ENCODE measurements at regions of chr5 and their contacts with region 1.

Region 1: GRCh38 chr5:154384480-154385235 is 61.1 kb upstream of the SAP30L start:
- DNase-seq: peak; percentile 89
- ATAC-seq: peak; percentile 86
- H3K4me3 ChIP-seq: peak overlapping the region in 4 of 5 experiments; percentile 18 to 56 (median 26)
- H3K4me3 Mint-ChIP-seq: peak overlapping the region; percentile 87
- H3K27ac ChIP-seq: peak overlapping the region; percentile 88 to 95
- H3K27ac Mint-ChIP-seq: peak overlapping the region; percentile 94
- H3K4me1 ChIP-seq: peaks cover 25 to 32% of the 10 kb centered on the region in 2 donors
- H3K4me1 Mint-ChIP-seq: peaks cover 31% of the 10 kb centered on the region
- H3K27me3 ChIP-seq: no peaks in the 10 kb centered on the region
- H3K27me3 Mint-ChIP-seq: no peaks in the 10 kb centered on the region
- CTCF ChIP-seq: no peak

Region 2: GRCh38 chr5:154368041-154368800 is 16.4 kb before region 1 on chr5:
- CTCF ChIA-PET with region 1: no interaction called
- POLR2A ChIA-PET with region 1: no interaction called
- intact Hi-C with region 1: no loop called
- DNase-seq: no peak
- ATAC-seq: no peak
- H3K4me3 ChIP-seq: no peak overlapping the region
- H3K4me3 Mint-ChIP-seq: no peak overlapping the region
- H3K27ac ChIP-seq: no peak overlapping the region
- H3K27ac Mint-ChIP-seq: no peak overlapping the region
- H3K4me1 ChIP-seq: no peaks in the 10 kb centered on the region
- H3K4me1 Mint-ChIP-seq: no peaks in the 10 kb centered on the region
- H3K27me3 ChIP-seq: no peaks in the 10 kb centered on the region
- H3K27me3 Mint-ChIP-seq: no peaks in the 10 kb centered on the region
- CTCF ChIP-seq: no peak

Region 3: GRCh38 chr5:154395407-154396258 is 11.0 kb after region 1 on chr5:
- CTCF ChIA-PET with region 1: interaction called, 3 read pairs
- POLR2A ChIA-PET with region 1: no interaction called
- intact Hi-C with region 1: loop called (anchors 1 kb)
- DNase-seq: peak; percentile 50
- ATAC-seq: peak; percentile 72
- H3K4me3 ChIP-seq: no peak overlapping the region
- H3K4me3 Mint-ChIP-seq: peak overlapping the region; percentile 29
- H3K27ac ChIP-seq: no peak overlapping the region
- H3K27ac Mint-ChIP-seq: peak overlapping the region; percentile 51
- H3K4me1 ChIP-seq: peaks cover 4 to 14% of the 10 kb centered on the region in 2 donors
- H3K4me1 Mint-ChIP-seq: peaks cover 24% of the 10 kb centered on the region
- H3K27me3 ChIP-seq: no peaks in the 10 kb centered on the region
- H3K27me3 Mint-ChIP-seq: no peaks in the 10 kb centered on the region
- CTCF ChIP-seq: no peak

Measured in B cell (primary cell).